Sigmoid colon (tissue), 7 donors: ENCODE measurements at regions of chr2 and their contacts with region 1.

Region 1: GRCh38 chr2:187453078-187453641 is 5.1 kb upstream of the CALCRL start:
- DNase-seq: no peak
- H3K4me3 ChIP-seq: no peak overlapping the region
- H3K27ac ChIP-seq: no peak overlapping the region
- H3K4me1 ChIP-seq: no peaks in the 10 kb centered on the region
- H3K27me3 ChIP-seq: no peaks in the 10 kb centered on the region
- CTCF ChIP-seq: peak in 1 of 4 experiments; percentile 21
- EP300 ChIP-seq: no peak
- POLR2A ChIP-seq: no peak

Region 2: GRCh38 chr2:186862869-186863709 is 590.1 kb before region 1 on chr2:
- intact Hi-C with region 1: loop called (anchors 5 kb)
- DNase-seq: no peak
- H3K4me3 ChIP-seq: no peak overlapping the region
- H3K27ac ChIP-seq: no peak overlapping the region
- H3K4me1 ChIP-seq: no peaks in the 10 kb centered on the region
- H3K27me3 ChIP-seq: no peaks in the 10 kb centered on the region
- CTCF ChIP-seq: peak in 2 of 4 experiments; percentile 18 to 65
- EP300 ChIP-seq: no peak
- POLR2A ChIP-seq: no peak